HepG2 (cell line): ENCODE measurements at regions of chr6 and their contacts with region 1.

Region 1: DNA sequence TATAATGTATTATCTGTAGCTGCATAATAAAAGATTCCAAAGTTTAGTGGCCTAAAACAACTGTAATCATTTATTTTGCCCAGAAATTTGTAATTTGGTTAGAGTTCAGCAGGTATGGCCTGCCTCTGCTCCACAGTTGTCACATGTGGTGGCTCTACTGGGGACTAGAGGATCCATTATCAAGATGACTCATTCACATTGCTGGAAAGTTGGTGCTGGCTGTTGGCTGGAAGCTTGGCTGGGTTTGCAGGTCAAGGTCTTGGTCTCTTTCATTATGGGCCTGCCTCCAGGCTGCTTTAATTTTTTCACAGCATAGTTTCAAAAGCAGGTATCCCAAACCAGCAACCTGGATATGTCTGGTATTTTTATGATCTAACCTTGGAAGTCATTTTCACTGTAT is 17.6 kb downstream of the TRDN start:
- DNase-seq: peak; percentile 4
- ATAC-seq: no peak
- H3K4me3 ChIP-seq: no peak overlapping the region
- H3K27ac ChIP-seq: no peak overlapping the region
- H3K4me1 ChIP-seq: no peaks in the 10 kb centered on the region
- H3K27me3 ChIP-seq: no peaks in the 10 kb centered on the region
- CTCF ChIP-seq: no peak
- EP300 ChIP-seq: no peak
- POLR2A ChIP-seq: no peak
- RAD21 ChIP-seq: no peak

Region 2: GRCh38 chr6:122553697-122554096 is 1065.5 kb before region 1 on chr6:
- CTCF ChIA-PET with region 1: no interaction called
- POLR2A ChIA-PET with region 1: no interaction called
- in situ Hi-C with region 1: no loop called
- intact Hi-C with region 1: loop called (anchors 5 kb)
- DNase-seq: no peak
- ATAC-seq: no peak
- H3K4me3 ChIP-seq: no peak overlapping the region
- H3K27ac ChIP-seq: no peak overlapping the region
- H3K4me1 ChIP-seq: no peaks in the 10 kb centered on the region
- H3K27me3 ChIP-seq: no peaks in the 10 kb centered on the region
- CTCF ChIP-seq: no peak
- EP300 ChIP-seq: no peak
- POLR2A ChIP-seq: no peak
- RAD21 ChIP-seq: no peak

Region 3: GRCh38 chr6:123681957-123682462 is 62.9 kb after region 1 on chr6:
- CTCF ChIA-PET with region 1: no interaction called
- POLR2A ChIA-PET with region 1: no interaction called
- in situ Hi-C with region 1: no loop called
- intact Hi-C with region 1: no loop called
- DNase-seq: no peak
- ATAC-seq: no peak
- H3K4me3 ChIP-seq: no peak overlapping the region
- H3K27ac ChIP-seq: no peak overlapping the region
- H3K4me1 ChIP-seq: no peaks in the 10 kb centered on the region
- H3K27me3 ChIP-seq: no peaks in the 10 kb centered on the region
- CTCF ChIP-seq: no peak
- EP300 ChIP-seq: no peak
- POLR2A ChIP-seq: no peak
- RAD21 ChIP-seq: no peak